Heart right ventricle (tissue), 16 donors: ENCODE measurements at regions of chr20 and their contacts with region 1.

Region 1: GRCh38 chr20:33459599-33459998 is 16.0 kb upstream of the SNTA1 start:
- DNase-seq: no peak
- ATAC-seq: no peak
- H3K4me3 ChIP-seq: no peak overlapping the region
- H3K27ac ChIP-seq: no peak overlapping the region
- H3K4me1 ChIP-seq: peaks cover 0 to 16% (median 0%) of the 10 kb centered on the region in 9 donors
- H3K27me3 ChIP-seq: no peaks in the 10 kb centered on the region
- CTCF ChIP-seq: no peak

Region 2: DNA sequence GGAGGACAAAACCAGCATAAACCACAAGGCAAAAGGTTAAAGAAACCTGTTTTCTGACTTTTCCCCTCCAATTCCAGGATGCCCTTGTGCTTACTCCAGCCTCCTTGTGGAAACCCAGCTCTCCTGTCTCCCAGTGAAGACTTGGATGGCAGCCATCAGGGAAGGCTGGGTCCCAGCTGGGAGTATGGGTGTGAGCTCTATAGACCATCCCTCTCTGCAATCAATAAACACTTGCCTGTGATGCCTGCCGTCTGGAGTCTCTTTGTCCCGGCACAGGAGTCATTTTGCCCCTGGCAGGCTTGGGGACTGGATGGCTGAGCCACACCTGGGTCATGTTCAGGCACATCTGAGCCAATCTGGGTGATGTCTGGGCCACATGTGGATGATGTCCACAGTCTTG is 150.0 kb before region 1 on chr20:
- intact Hi-C with region 1: no loop called
- DNase-seq: no peak
- ATAC-seq: no peak
- H3K4me3 ChIP-seq: no peak overlapping the region
- H3K27ac ChIP-seq: no peak overlapping the region
- H3K4me1 ChIP-seq: no peaks in the 10 kb centered on the region
- H3K27me3 ChIP-seq: peaks cover 0 to 16% (median 0%) of the 10 kb centered on the region in 7 donors
- CTCF ChIP-seq: no peak

Region 3: DNA sequence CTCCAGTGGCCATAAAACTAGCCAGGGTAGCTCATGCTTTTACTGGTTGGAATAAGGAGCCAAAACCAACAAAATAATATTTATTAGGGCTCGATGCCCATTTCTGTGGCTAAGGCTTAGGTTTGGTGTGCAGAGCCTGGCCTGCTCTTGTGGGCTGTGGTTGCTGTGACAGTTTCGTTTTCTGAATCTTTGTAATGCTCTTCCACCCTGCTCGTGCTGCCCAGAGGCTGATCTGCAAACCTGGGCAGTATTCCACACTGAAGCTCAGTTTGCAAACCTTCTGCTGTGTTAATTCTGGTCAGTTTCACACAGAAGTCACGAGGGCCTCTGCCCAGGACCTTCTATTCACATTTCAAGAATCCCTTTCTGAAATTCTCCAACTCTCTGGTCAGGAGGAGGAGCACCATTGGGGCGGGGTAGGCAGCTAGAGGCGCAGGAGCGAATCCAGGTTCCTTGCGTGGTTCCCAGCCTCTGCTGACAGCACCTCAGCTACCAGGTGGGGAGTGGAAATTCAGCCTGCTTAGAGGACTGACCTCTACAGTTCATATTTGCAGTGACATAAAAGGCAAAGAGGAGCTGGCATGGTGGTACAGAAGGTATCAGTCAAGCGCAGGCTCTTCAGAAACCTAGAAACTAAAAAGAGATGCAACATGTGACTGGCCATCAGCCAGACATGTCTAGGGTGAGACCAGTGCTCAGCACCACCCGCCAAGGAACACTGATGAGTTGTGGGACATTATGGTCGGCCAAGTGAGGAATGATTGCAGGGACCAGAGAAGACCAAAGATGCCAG is 188.2 kb after region 1 on chr20:
- intact Hi-C with region 1: loop called in 7 of 10 experiments (anchors 2 to 10 kb)
- DNase-seq: no peak
- ATAC-seq: peak; percentile 9 to 66 (median 42)
- H3K4me3 ChIP-seq: no peak overlapping the region
- H3K27ac ChIP-seq: peak overlapping the region in 2 of 10 donors; percentile 12 to 16
- H3K4me1 ChIP-seq: peaks cover 0 to 36% (median 31%) of the 10 kb centered on the region in 9 donors
- H3K27me3 ChIP-seq: no peaks in the 10 kb centered on the region
- CTCF ChIP-seq: no peak

Region 4: DNA sequence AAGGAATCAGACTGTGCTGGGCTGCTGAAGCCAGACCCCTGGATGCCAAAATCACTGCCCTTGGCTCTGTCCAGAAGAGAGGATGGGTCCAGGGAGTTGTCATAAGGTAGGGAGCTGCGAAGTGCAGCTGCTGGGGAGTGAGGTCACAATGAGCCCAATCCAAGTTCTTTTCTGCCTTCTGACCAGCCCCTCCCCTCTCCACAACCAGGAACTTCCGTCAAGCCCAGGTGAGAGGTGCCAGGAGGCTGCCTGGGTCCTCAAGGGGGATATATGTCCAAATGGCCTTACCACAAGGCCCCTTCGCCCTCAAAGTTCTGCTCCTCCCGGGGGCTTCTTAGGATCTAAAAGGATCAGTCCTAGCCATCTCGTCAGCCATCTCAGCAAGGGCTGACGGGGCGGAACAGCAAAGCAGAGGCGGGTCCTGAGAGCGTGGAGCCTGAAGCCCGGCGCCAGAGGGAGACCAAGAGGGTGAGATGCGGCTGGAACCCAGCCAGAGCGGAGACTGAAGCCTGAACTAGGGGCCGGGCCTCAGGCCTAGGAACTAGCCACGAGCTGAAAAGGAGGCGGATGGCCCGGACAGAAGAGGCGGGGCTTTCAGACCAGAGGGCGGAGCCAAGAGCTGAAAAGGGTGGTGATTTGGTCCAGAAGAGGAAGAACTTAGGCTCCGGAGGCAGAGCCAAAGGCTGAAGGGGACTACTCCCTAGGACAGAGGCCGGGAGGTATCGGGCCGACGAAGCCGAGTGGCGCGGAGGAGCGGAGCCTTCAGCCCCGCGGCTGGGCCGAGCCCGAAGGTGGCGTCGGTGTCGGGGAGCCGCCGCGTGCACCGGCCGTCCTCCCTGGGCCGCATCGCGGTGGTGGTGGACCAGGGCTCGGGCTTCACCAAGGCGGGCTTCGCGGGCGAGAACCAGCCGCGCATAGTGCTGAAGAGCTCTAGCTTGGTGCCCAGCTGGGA is 207.0 kb after region 1 on chr20 and contains the start of gene ACTL10:
- intact Hi-C with region 1: loop called in 6 of 10 experiments (anchors 2 to 5 kb)
- DNase-seq: peak; percentile 98
- ATAC-seq: peak; percentile 73 to 91 (median 83)
- H3K4me3 ChIP-seq: peak within 1 kb of the TSS; percentile 30 to 81 (median 62)
- H3K27ac ChIP-seq: peak within 1 kb of the TSS; percentile 63 to 89 (median 82)
- H3K4me1 ChIP-seq: peaks cover 19 to 60% (median 44%) of the 10 kb centered on the region in 9 donors
- H3K27me3 ChIP-seq: no peaks in the 10 kb centered on the region
- CTCF ChIP-seq: peak in 6 of 9 donors; percentile 13 to 65 (median 52)
- total RNA-seq, gene ACTL10: 0.11 to 0.39 (median 0.25) TPM in 6 of 10 donors, not detected in the others

Region 5: DNA sequence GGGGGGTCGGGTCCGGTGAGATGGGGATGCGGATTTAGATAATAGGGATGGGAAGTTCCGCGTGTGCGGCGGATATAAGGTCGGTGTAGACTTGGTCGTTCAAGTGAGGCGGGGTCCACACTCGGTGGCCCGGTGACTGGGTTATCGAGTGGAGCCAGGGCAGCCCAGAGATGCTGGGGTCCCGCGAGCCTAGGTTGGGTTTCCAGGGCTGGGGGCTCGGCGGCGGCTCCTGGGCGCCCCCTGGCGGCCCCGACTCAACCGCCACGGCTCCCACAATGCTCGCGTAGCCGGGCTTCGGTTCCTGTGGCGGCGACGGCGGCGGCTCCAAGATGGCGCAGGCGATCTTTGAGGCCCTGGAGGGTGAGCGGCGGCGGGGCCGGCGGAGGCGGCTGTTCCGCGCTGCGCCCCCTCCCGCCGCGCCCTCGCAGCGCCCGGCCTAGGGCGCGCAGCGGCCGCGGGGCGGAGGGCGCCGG is 272.1 kb after region 1 on chr20 and contains the start of gene ZNF341:
- intact Hi-C with region 1: loop called in 2 of 10 experiments (anchors 5 kb)
- DNase-seq: peak; percentile 88 to 91
- ATAC-seq: peak; percentile 83 to 91 (median 88)
- H3K4me3 ChIP-seq: peak within 1 kb of the TSS; percentile 33 to 81 (median 68)
- H3K27ac ChIP-seq: peak within 1 kb of the TSS; percentile 90 to 98 (median 95)
- H3K4me1 ChIP-seq: peaks cover 3 to 31% (median 23%) of the 10 kb centered on the region in 9 donors
- H3K27me3 ChIP-seq: no peaks in the 10 kb centered on the region
- CTCF ChIP-seq: peak; percentile 88 to 93 (median 91)
- total RNA-seq, gene ZNF341: 0.85 to 2.6 (median 1.5) TPM